Activated CD4-positive, alpha-beta T cell treated with anti-CD3 and anti-CD28 coated beads for 36 hours (primary cell): ENCODE measurements at regions of chr18 and their contacts with region 1.

Region 1: GRCh38 chr18:5890331-5891183 is 4.8 kb downstream of the TMEM200C start:
- DNase-seq: peak; percentile 66
- ATAC-seq: peak; percentile 92
- H3K4me3 Mint-ChIP-seq: no peak overlapping the region
- H3K27ac Mint-ChIP-seq: no peak overlapping the region
- H3K4me1 Mint-ChIP-seq: peaks cover 9% of the 10 kb centered on the region
- H3K27me3 Mint-ChIP-seq: peaks cover 46% of the 10 kb centered on the region

Region 2: DNA sequence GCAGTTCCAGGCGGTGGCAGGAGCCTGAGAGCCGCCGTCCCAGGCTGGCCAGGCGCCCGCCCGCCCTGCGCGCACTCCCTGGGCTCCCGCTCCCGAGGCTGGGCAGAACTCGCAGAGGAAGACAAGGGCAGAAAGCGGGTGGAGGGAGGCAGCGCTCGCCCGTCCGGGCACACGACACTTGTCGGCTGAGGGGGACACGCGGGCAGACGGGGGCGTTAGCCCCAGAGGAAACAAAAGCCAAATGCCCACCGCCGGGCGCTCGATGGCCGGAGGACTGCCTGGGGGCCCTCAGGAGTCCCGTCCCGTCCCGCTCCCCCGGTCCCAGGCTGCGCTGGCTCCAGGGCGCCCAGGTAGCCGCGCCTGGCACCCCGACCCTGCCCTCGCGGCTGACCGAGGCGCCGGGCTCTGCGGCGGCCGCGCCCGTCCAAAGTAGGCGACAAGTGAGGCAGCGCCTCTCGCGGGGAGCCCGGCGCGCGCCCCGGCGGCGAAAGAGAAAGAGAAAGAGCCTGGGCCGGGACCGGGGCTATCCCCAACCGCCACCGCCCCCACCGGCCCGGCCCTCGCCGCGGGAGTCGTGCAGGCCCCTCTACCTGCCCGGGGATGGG is 523.7 kb after region 1 on chr18:
- CTCF ChIA-PET with region 1: no interaction called
- POLR2A ChIA-PET with region 1: no interaction called
- intact Hi-C with region 1: loop called in 1 of 2 experiments (anchors 10 kb)
- DNase-seq: peak; percentile 73
- ATAC-seq: peak; percentile 93
- H3K4me3 Mint-ChIP-seq: no peak overlapping the region
- H3K27ac Mint-ChIP-seq: no peak overlapping the region
- H3K4me1 Mint-ChIP-seq: peaks cover 8% of the 10 kb centered on the region
- H3K27me3 Mint-ChIP-seq: peaks cover 34% of the 10 kb centered on the region